Mammary epithelial cell (primary cell): ENCODE measurements at regions of chrX and their contacts with region 1.

Region 1: DNA sequence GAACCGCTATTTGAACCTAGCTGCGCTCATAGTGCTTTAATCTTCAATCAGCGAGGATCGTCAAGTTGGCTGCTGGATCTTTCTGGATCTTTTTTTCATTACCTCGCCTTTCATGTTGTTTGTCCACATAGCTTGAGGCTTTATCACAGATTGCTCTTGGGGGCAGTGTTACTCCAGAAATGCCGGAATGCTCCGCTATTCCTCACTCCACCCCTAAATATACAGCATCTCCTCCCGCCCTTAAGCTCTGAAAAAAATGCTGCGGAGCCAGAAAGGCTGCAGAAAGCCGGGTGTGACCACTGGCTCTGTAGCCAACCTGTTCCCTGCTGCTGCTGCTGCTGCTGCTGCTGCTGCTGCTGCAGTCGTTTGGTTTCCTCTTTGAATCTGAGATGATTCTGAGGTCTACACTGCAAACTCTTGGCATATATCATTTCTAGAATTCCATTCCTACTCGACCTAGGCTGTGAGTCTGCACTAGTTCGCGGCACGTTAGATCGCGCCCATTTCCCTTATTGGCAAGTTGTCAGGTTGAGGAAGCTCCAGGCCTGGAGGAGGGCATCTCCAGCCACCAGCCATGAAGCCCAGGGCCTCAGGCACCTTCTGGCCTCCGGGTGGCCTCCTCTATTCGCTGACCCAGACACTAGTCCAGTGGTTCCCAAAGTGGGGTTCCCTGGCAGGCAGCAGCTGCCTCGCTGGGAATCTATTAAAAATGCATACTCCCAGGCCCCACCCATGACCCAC is 34.2 kb downstream of the WDR13 start:
- DNase-seq: peak; percentile 85
- H3K4me3 ChIP-seq: no peak overlapping the region
- H3K27ac ChIP-seq: no peak overlapping the region
- H3K4me1 ChIP-seq: no peaks in the 10 kb centered on the region
- H3K27me3 ChIP-seq: no peaks in the 10 kb centered on the region
- CTCF ChIP-seq: peak; percentile 28 to 55

Region 2: GRCh38 chrX:48945516-48946348 is 314.2 kb after region 1 on chrX:
- CTCF ChIA-PET with region 1: no interaction called
- dilution Hi-C with region 1: no loop called
- in situ Hi-C with region 1: no loop called
- intact Hi-C with region 1: loop called (anchors 5 kb)
- DNase-seq: peak; percentile 27
- H3K4me3 ChIP-seq: no peak overlapping the region
- H3K27ac ChIP-seq: no peak overlapping the region
- H3K4me1 ChIP-seq: no peaks in the 10 kb centered on the region
- H3K27me3 ChIP-seq: no peaks in the 10 kb centered on the region
- CTCF ChIP-seq: peak; percentile 69 to 76